Activated T-helper 1 cell treated with anti-CD3 and anti-CD28 coated beads, Interleukin-12 subunit alpha, Interleukin-12 subunit beta, Interleukin-2, Interleukin-4 antibody, amounts not matched to agents 30 ng/mL and 10 ng/mL and 1 ng/mL, durations not matched to agents 14 hours and 24 hours and 36 hours (primary cell): ENCODE measurements at regions of chr14 and their contacts with region 1.

Region 1: DNA sequence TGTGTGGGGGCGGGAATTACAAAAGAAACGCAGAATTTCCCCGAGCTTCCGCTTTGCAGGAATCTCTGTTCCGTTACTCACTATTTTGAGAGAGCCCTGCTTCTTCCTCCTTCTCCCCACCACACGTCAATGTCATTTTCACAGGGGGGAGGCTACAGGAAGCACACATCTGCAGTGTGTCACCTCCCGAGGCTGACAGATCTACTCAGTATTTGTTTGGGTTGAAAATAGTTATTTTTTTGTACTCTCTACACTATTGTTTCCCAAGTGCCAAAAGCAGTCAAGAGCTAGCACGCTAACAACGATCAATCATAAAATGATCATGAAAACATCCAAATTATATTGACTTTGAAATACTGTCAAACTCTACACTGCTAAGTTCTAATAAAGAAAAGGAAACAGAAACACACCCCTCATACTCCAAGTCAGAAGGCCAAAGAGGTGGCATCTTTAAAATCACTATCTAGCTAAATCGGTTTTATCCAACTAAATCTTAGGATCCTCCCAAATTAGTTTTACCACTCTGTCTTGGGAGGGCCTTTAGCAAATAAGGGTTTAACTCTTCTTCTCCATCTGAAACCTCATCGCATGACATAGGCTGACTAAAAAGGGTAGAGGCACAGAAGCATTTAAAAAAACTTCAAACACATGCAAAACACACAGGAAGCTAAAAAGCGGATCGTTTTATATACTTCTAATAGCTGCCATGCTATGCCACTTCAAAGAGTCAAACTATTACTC is 51.8 kb downstream of the FOXN3 start:
- DNase-seq: peak; percentile 40
- H3K4me3 Mint-ChIP-seq: peak overlapping the region; percentile 73
- H3K27ac Mint-ChIP-seq: peak overlapping the region; percentile 89
- H3K4me1 Mint-ChIP-seq: peaks cover 38% of the 10 kb centered on the region
- H3K27me3 Mint-ChIP-seq: no peaks in the 10 kb centered on the region

Region 2: GRCh38 chr14:89276424-89276975 is 88.7 kb before region 1 on chr14:
- intact Hi-C with region 1: loop called (anchors 1 kb)
- DNase-seq: peak; percentile 78
- H3K4me3 Mint-ChIP-seq: peak overlapping the region; percentile 70
- H3K27ac Mint-ChIP-seq: peak overlapping the region; percentile 98
- H3K4me1 Mint-ChIP-seq: peaks cover 79% of the 10 kb centered on the region
- H3K27me3 Mint-ChIP-seq: no peaks in the 10 kb centered on the region

Region 3: DNA sequence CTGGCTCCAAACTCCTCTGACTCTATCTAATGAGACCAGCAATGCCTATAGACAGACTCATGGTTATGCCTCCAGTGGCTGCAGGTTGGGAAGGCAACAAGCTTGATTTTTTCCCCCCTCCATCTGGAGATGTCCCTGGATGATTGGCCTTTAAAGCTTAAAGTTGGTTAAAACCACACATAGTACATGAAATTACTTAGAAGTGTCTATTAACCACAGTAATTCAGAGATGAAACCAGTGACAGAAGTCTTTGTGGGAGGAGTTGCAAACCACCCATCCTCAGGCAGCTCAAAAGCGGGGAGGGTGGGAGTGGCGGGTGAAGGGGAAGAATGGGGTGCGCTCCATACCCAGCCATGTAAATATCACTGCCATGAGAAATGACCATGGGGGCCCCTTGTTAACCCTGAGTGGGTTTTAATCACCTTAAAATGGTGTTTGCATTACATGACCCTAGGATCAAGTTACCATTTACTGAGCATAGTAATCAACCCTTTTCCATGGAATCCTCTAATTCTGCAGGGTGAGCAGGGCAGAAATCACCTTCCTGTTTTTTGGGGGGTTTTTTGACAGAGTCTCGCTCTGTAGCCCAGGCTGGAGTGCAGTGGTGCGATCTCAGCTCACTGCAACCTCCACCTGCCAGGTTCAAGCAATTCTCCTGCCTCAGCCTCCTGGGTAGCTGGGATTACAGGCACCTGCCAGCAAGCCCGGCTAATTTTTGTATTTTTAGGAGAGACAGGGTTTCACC is 81.7 kb before region 1 on chr14:
- intact Hi-C with region 1: loop called (anchors 1 kb)
- DNase-seq: peak; percentile 9
- H3K4me3 Mint-ChIP-seq: peak overlapping the region; percentile 28
- H3K27ac Mint-ChIP-seq: peak overlapping the region; percentile 45
- H3K4me1 Mint-ChIP-seq: peaks cover 75% of the 10 kb centered on the region
- H3K27me3 Mint-ChIP-seq: no peaks in the 10 kb centered on the region

Region 4: DNA sequence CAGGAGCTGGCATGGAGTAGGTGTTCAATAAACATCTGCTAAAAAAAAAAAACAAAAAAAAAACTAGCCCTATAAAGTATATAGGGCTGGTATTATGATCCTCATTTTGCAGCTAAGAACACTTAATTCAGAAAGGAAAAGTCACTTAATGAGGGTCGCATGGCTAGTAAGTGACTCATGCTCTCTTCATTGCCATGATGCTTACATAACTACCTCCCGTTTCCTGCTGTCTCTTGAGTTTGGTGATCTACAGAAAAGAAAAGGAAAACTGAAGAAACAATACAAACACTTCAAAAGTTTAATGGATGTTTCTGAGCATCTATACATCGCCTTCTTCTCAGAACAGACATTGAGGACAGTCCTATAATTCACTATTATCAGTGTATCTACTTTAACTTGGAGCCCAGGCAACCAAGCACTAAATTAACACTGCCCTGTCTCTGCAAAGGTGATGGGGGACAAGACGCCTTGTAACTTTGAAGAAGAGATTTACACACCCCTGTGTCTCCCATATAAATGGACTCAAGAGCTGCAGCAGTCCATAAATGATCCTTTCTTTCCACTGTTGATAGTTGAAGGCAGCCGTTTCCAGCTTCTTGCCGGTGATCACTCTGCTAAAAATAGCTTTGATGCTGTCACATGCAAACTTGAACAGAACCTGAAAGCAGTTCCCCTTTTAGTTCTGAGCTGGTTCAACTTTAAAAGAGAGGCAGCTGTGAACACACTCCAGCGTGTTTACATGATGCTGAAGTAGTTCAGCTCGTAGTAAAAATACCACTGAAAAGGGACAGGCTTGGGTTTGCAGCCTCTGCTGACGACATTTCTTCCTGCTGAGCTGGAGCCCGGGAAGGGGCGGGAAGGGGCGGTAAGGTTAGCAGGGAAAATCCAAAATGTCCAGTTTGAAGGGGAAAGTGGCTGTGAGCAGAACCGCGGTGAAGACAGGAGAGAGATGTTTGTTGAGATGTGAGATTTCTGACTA is 61.5 kb before region 1 on chr14:
- intact Hi-C with region 1: loop called (anchors 2 kb)
- DNase-seq: peak; percentile 25
- H3K4me3 Mint-ChIP-seq: peak overlapping the region; percentile 76
- H3K27ac Mint-ChIP-seq: peak overlapping the region; percentile 87
- H3K4me1 Mint-ChIP-seq: peaks cover 57% of the 10 kb centered on the region
- H3K27me3 Mint-ChIP-seq: no peaks in the 10 kb centered on the region

Region 5: DNA sequence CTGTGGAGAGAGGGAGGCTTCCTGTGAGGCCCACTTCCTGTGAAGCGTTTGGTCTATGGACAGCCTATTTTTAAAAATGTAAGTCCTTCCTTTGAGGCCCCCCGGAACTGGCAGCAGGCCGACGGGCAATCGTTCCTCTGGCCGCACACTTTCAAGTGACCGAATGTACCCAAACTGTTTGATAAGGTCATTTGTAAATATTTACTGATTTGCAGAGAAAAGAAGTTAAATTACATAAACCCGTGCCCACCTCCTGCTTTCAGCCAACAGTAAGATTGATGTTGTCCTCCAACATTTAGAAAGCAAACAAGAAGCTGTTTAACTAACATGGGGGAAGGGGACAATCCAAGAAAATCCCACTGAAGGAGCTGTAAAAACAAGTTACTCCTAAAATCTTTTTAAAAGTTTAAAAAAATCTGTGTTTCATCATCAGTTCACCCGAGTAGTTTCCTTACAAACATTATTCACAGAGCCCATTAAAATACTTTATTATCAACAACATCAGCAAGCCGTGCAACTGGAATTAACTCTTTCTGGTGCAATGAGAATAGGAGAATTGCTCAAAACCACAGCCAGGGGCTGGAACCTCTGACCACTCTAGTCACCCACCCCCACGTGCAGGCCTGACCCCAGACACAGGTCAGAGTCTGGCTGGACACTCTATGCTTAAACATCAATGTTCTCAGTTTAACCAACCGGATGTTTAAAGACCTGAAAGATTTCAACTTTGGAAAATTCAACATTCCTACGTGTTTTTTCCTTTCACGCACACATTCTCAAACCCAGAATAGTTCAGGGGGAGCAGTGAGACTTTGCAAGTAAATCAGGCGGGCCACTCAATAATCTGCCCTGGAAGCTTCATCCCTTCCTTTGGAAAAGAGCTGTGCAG is 13.5 kb before region 1 on chr14:
- intact Hi-C with region 1: loop called (anchors 2 kb)
- DNase-seq: no peak
- H3K4me3 Mint-ChIP-seq: peak overlapping the region; percentile 69
- H3K27ac Mint-ChIP-seq: peak overlapping the region; percentile 89
- H3K4me1 Mint-ChIP-seq: peaks cover 59% of the 10 kb centered on the region
- H3K27me3 Mint-ChIP-seq: no peaks in the 10 kb centered on the region

Region 6: DNA sequence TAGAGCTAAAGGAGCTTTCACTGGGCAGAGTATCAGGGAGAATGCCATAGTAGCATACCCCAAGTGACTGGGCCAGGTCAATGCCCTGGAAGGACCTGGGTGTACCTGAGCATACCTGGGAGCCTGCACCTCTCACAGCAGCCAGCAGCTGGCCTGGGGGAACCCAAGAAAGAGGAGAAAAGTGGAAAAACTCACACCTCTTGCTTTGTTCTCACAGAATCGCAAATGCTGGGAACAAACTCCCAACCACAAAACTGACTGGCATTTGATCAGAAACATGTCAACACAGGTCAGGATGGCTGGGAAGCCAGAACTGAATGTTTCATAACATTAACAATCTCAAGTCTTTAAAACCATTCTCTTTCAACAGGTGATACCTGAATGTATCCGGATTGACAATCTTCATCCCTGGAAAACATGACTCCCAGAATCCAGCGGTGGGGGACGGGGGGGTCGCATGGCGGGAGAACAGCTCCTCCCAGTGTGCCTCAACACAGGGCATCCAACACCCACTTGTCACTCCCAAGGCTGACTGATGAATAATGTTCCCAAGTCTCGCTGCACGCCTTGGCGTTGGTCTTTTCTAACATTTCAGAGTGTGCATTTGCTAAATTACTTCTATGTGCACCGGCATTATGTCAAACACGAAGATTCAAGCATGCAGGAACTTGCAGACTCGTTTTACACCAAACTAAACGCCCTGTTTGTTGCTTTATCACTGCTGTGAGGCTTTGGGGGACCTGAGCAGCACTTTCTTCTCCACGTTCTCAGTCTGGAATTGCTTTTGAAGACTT is 43.9 kb after region 1 on chr14:
- intact Hi-C with region 1: loop called (anchors 2 kb)
- DNase-seq: no peak
- H3K4me3 Mint-ChIP-seq: no peak overlapping the region
- H3K27ac Mint-ChIP-seq: no peak overlapping the region
- H3K4me1 Mint-ChIP-seq: peaks cover 35% of the 10 kb centered on the region
- H3K27me3 Mint-ChIP-seq: no peaks in the 10 kb centered on the region

Region 7: GRCh38 chr14:89445273-89445973 is 80.2 kb after region 1 on chr14:
- intact Hi-C with region 1: loop called (anchors 1 kb)
- DNase-seq: peak; percentile 11
- H3K4me3 Mint-ChIP-seq: peak overlapping the region; percentile 37
- H3K27ac Mint-ChIP-seq: peak overlapping the region; percentile 83
- H3K4me1 Mint-ChIP-seq: peaks cover 54% of the 10 kb centered on the region
- H3K27me3 Mint-ChIP-seq: no peaks in the 10 kb centered on the region